WTC11 (cell line): ENCODE measurements at regions of chr12 and their contacts with region 1.

Region 1: GRCh38 chr12:121917979-121918678 is at the start of gene CFAP251:
- DNase-seq: peak; percentile 98
- ATAC-seq: peak; percentile 96
- H3K4me3 Mint-ChIP-seq: peak within 1 kb of the TSS; percentile 70
- H3K27ac Mint-ChIP-seq: peak within 1 kb of the TSS; percentile 88
- H3K4me1 Mint-ChIP-seq: peaks cover 10% of the 10 kb centered on the region
- H3K27me3 Mint-ChIP-seq: no peaks in the 10 kb centered on the region; the same call in 1 of the 2 replicates
- CTCF ChIP-seq: peak; percentile 61
- total RNA-seq, gene CFAP251: 2.9 to 3.1 TPM (median 3.0 TPM) in 3 replicates

Region 2: GRCh38 chr12:121673003-121673511 is 245.1 kb before region 1 on chr12:
- CTCF ChIA-PET with region 1: no interaction called
- POLR2A ChIA-PET with region 1: no interaction called
- DNase-seq: no peak
- ATAC-seq: no peak
- H3K4me3 Mint-ChIP-seq: peak overlapping the region; percentile 78
- H3K27ac Mint-ChIP-seq: peak overlapping the region; percentile 86
- H3K4me1 Mint-ChIP-seq: peaks cover 28% of the 10 kb centered on the region
- H3K27me3 Mint-ChIP-seq: no peaks in the 10 kb centered on the region
- CTCF ChIP-seq: no peak

Region 3: DNA sequence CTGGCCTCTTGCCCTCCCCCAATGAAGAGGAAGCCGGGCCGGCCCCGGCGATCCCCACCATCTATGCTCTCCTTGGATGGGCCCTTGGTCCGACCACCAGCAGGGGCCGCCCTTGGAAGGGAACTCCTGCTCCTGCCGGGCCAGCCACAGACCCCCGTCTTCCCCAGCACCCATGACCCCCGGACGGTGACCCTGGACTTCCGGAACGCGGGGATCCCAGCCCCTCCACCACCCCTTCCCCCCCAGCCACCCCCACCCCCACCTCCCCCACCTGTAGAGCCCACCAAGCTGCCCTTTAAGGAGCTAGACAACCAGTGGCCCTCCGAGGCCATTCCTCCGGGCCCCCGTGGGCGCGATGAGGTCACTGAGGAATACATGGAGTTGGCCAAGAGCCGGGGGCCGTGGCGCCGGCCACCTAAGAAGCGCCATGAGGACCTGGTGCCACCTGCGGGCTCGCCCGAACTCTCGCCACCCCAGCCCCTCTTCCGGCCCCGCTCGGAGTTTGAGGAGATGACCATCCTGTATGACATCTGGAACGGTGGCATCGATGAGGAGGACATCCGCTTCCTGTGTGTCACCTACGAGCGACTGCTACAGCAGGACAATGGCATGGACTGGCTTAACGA is 94.9 kb before region 1 on chr12:
- CTCF ChIA-PET with region 1: no interaction called
- POLR2A ChIA-PET with region 1: no interaction called
- DNase-seq: no peak
- ATAC-seq: peak; percentile 48; the same call in 1 of the 2 replicates
- H3K4me3 Mint-ChIP-seq: no peak overlapping the region
- H3K27ac Mint-ChIP-seq: no peak overlapping the region
- H3K4me1 Mint-ChIP-seq: no peaks in the 10 kb centered on the region
- H3K27me3 Mint-ChIP-seq: no peaks in the 10 kb centered on the region
- CTCF ChIP-seq: no peak

Region 4: DNA sequence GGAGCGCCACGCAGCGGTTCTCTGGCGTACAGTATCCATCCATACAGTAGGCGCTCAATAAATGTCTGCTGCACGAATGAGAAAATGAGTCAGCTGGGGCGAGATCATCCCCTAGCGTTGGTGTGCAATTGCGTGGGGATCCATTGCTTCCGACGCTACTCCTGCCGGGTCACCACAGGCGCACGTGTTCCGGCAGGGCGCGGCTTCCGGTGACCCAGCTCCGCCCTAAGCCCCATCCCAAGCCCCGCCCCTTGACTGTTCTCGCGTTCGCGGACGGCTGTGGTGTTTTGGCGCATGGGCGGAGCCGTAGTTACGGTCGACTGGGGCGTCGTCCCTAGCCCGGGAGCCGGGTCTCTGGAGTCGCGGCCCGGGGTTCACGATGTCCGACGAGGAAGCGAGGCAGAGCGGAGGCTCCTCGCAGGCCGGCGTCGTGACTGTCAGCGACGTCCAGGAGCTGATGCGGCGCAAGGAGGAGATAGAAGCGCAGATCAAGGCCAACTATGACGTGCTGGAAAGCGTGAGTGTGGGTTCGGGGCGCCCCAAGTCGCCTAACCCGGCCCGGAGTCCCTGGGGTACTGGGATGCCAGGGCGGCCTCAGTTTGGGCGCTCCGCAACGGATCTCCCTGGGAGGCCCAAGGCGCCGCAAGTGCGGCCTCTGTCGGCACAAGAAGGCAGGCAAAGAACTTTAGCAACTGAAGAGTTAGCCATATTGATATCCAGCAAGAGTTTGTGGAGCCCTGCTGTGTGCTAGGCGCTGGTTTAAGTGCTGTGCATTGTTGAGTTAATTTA is 29.5 kb before region 1 on chr12 and contains the start of gene PSMD9:
- CTCF ChIA-PET with region 1: interaction called, 13 read pairs
- POLR2A ChIA-PET with region 1: no interaction called
- DNase-seq: peak; percentile 98
- ATAC-seq: peak; percentile 94
- H3K4me3 Mint-ChIP-seq: peak within 1 kb of the TSS; percentile 95
- H3K27ac Mint-ChIP-seq: peak within 1 kb of the TSS; percentile 99
- H3K4me1 Mint-ChIP-seq: peaks cover 20% of the 10 kb centered on the region
- H3K27me3 Mint-ChIP-seq: peaks cover 26% of the 10 kb centered on the region
- CTCF ChIP-seq: peak; percentile 26; the same call in 1 of the 2 replicates
- total RNA-seq, gene PSMD9: 35.3 to 36.4 TPM (median 36.2 TPM) in 3 replicates

Region 5: GRCh38 chr12:121933522-121934308 is 15.6 kb after region 1 on chr12:
- CTCF ChIA-PET with region 1: interaction called, 12 read pairs
- POLR2A ChIA-PET with region 1: no interaction called
- DNase-seq: peak; percentile 62
- ATAC-seq: peak; percentile 98
- H3K4me3 Mint-ChIP-seq: no peak overlapping the region
- H3K27ac Mint-ChIP-seq: no peak overlapping the region; the same call in none of the 2 replicates
- H3K4me1 Mint-ChIP-seq: peaks cover 27% of the 10 kb centered on the region
- H3K27me3 Mint-ChIP-seq: no peaks in the 10 kb centered on the region; the same call in 1 of the 2 replicates
- CTCF ChIP-seq: no peak

Region 6: GRCh38 chr12:121947981-121948380 is 29.9 kb after region 1 on chr12:
- CTCF ChIA-PET with region 1: interaction called, 11 read pairs
- POLR2A ChIA-PET with region 1: no interaction called
- DNase-seq: no peak
- ATAC-seq: peak; percentile 47; the same call in 1 of the 2 replicates
- H3K4me3 Mint-ChIP-seq: no peak overlapping the region
- H3K27ac Mint-ChIP-seq: peak overlapping the region; percentile 46; the same call in 1 of the 2 replicates
- H3K4me1 Mint-ChIP-seq: peaks cover 11% of the 10 kb centered on the region
- H3K27me3 Mint-ChIP-seq: no peaks in the 10 kb centered on the region
- CTCF ChIP-seq: no peak

Region 7: GRCh38 chr12:122028165-122028904 is 110.2 kb after region 1 on chr12:
- CTCF ChIA-PET with region 1: interaction called, 25 read pairs
- POLR2A ChIA-PET with region 1: no interaction called
- DNase-seq: no peak
- ATAC-seq: no peak
- H3K4me3 Mint-ChIP-seq: no peak overlapping the region
- H3K27ac Mint-ChIP-seq: peak overlapping the region; percentile 45; the same call in 1 of the 2 replicates
- H3K4me1 Mint-ChIP-seq: peaks cover 29% of the 10 kb centered on the region
- H3K27me3 Mint-ChIP-seq: peaks cover 3% of the 10 kb centered on the region
- CTCF ChIP-seq: no peak

Region 8: GRCh38 chr12:122078141-122079032 is 160.3 kb after region 1 on chr12 and contains the start of gene MLXIP:
- CTCF ChIA-PET with region 1: interaction called, 12 read pairs
- POLR2A ChIA-PET with region 1: no interaction called
- DNase-seq: peak; percentile 91
- ATAC-seq: peak; percentile 74
- H3K4me3 Mint-ChIP-seq: peak within 1 kb of the TSS; percentile 87
- H3K27ac Mint-ChIP-seq: no peak within 1 kb of the TSS
- H3K4me1 Mint-ChIP-seq: peaks cover 31% of the 10 kb centered on the region
- H3K27me3 Mint-ChIP-seq: peaks cover 8% of the 10 kb centered on the region
- CTCF ChIP-seq: no peak
- total RNA-seq, gene MLXIP: 40.5 to 49.4 TPM (median 44.4 TPM) in 3 replicates